ENCODE measurements at regions of chr14 and their contacts with region 1.

Region 1: GRCh38 chr14:77028384-77029231 is at the start of gene IRF2BPL:
- DNase-seq: peak; percentile 97 to 100
- H3K4me3 ChIP-seq: peak within 1 kb of the TSS; percentile 64
- H3K27ac ChIP-seq: peak within 1 kb of the TSS; percentile 88
- H3K4me1 ChIP-seq: peaks cover 54% of the 10 kb centered on the region
- H3K27me3 ChIP-seq: no peaks in the 10 kb centered on the region
- CTCF ChIP-seq: no peak
- total RNA-seq, gene IRF2BPL: 74.6 and 84.5 TPM in 2 replicates

Region 2: DNA sequence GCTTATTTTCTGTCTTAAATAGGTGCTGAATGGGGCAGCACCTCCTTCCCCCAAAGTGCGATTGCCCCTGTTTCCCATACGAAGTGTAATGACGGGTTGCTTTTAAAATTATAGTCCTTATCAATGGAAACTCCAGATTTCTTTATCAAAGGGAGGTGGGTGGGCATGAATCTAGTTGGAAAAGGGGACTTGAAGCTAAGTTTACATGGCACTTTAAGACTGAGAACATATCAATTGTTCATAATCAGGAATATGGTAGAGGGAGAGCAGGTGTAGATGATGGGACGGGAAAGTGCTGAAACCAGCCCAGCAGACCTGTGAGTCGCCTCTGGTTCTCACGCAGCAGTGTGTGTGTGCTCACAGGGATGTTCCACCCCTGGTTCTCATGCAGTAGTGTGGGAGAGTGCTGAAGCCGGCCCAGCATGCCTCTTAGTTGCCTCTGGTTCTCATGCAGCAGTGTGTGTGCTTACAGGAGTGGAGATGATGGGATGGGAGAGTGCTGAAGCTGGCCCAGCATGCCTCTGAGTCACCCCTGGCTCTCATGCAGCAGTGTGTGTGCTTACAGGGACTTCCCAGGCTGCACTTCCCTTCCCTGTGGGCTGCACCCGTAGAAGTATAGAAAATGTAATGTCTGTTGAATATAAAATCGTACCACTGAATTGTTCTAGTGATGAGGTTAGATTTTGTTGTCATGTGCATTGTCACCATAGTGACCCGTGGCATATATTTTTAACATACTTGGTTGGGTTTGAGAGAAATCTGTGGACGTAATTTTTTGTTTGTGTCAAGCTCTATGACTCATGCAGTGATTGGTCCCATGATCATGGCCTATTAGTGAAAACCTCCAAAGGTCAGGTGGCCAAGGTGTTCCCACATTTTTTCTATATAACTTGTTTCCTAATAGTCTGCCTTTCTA is 825.3 kb before region 1 on chr14:
- CTCF ChIA-PET with region 1: no interaction called
- POLR2A ChIA-PET with region 1: no interaction called
- intact Hi-C with region 1: no loop called
- DNase-seq: peak; percentile 59 to 66
- H3K4me3 ChIP-seq: no peak overlapping the region
- H3K27ac ChIP-seq: peak overlapping the region; percentile 49
- H3K4me1 ChIP-seq: peaks cover 27% of the 10 kb centered on the region
- H3K27me3 ChIP-seq: no peaks in the 10 kb centered on the region
- CTCF ChIP-seq: no peak

Region 3: GRCh38 chr14:76911473-76911872 is 117.1 kb before region 1 on chr14:
- CTCF ChIA-PET with region 1: interaction called, 14 read pairs
- POLR2A ChIA-PET with region 1: interaction called, 4 read pairs
- intact Hi-C with region 1: loop called (anchors 1 kb)
- DNase-seq: no peak
- H3K4me3 ChIP-seq: no peak overlapping the region
- H3K27ac ChIP-seq: no peak overlapping the region
- H3K4me1 ChIP-seq: peaks cover 42% of the 10 kb centered on the region
- H3K27me3 ChIP-seq: no peaks in the 10 kb centered on the region
- CTCF ChIP-seq: no peak

Region 4: DNA sequence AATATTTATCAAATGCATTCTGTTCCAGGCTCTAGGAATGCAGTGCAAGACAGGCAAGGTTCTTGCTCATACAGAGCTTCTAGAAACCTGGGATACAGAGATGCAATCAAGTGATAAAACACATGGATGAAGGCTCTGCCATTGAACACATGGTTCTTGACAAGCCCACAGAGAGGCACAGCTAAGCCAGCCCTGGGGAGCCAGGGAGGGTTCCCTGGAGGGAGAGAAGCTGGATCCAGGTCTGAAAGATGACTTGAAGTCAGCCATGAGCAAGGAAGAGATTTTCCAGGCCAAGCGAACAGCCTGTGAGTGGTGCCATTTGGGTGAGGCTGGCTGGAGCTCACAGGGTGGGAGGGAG is 66.3 kb before region 1 on chr14:
- CTCF ChIA-PET with region 1: interaction called, 12 read pairs
- POLR2A ChIA-PET with region 1: interaction called, 17 read pairs
- intact Hi-C with region 1: loop called (anchors 1 kb)
- DNase-seq: no peak
- H3K4me3 ChIP-seq: peak overlapping the region; percentile 48
- H3K27ac ChIP-seq: peak overlapping the region; percentile 90
- H3K4me1 ChIP-seq: peaks cover 65% of the 10 kb centered on the region
- H3K27me3 ChIP-seq: no peaks in the 10 kb centered on the region
- CTCF ChIP-seq: no peak

Region 5: GRCh38 chr14:77040059-77040740 is 11.6 kb after region 1 on chr14:
- CTCF ChIA-PET with region 1: interaction called, 10 read pairs
- POLR2A ChIA-PET with region 1: interaction called, 21 read pairs
- intact Hi-C with region 1: loop called (anchors 1 kb)
- DNase-seq: peak; percentile 99
- H3K4me3 ChIP-seq: peak overlapping the region; percentile 41
- H3K27ac ChIP-seq: peak overlapping the region; percentile 85
- H3K4me1 ChIP-seq: peaks cover 95% of the 10 kb centered on the region
- H3K27me3 ChIP-seq: no peaks in the 10 kb centered on the region
- CTCF ChIP-seq: no peak

Region 6: GRCh38 chr14:77076113-77076631 is 47.6 kb after region 1 on chr14:
- CTCF ChIA-PET with region 1: interaction called, 9 read pairs
- POLR2A ChIA-PET with region 1: interaction called, 14 read pairs
- intact Hi-C with region 1: no loop called
- DNase-seq: no peak
- H3K4me3 ChIP-seq: no peak overlapping the region
- H3K27ac ChIP-seq: no peak overlapping the region
- H3K4me1 ChIP-seq: peaks cover 35% of the 10 kb centered on the region
- H3K27me3 ChIP-seq: no peaks in the 10 kb centered on the region
- CTCF ChIP-seq: no peak